PC-9 (cell line): ENCODE measurements at regions of chr3 and their contacts with region 1.

Region 1: GRCh38 chr3:187889601-187890404 is 144.5 kb upstream of the BCL6 start:
- DNase-seq: no peak
- H3K4me3 ChIP-seq: no peak overlapping the region
- H3K27ac ChIP-seq: no peak overlapping the region
- H3K4me1 ChIP-seq: peaks cover 16% of the 10 kb centered on the region
- H3K27me3 ChIP-seq: no peaks in the 10 kb centered on the region
- CTCF ChIP-seq: no peak

Region 2: GRCh38 chr3:187900993-187901755 is 11.4 kb after region 1 on chr3:
- CTCF ChIA-PET with region 1: no interaction called
- POLR2A ChIA-PET with region 1: no interaction called
- intact Hi-C with region 1: loop called (anchors 1 kb)
- DNase-seq: no peak
- H3K4me3 ChIP-seq: no peak overlapping the region
- H3K27ac ChIP-seq: no peak overlapping the region
- H3K4me1 ChIP-seq: no peaks in the 10 kb centered on the region; the same call in 1 of the 2 replicates
- H3K27me3 ChIP-seq: no peaks in the 10 kb centered on the region
- CTCF ChIP-seq: no peak